Activated CD8-positive, alpha-beta T cell treated with anti-CD3 and anti-CD28 coated beads, Interleukin-2, amount 10 ng/mL, durations not matched to agents 7 days and 5 days (primary cell): ENCODE measurements at regions of chr4 and their contacts with region 1.

Region 1: GRCh38 chr4:77203380-77204197 is 46.6 kb downstream of the CCNG2 start:
- DNase-seq: peak; percentile 82
- ATAC-seq: peak; percentile 80
- H3K4me3 Mint-ChIP-seq: no peak overlapping the region
- H3K27ac Mint-ChIP-seq: no peak overlapping the region
- H3K4me1 Mint-ChIP-seq: peaks cover 12% of the 10 kb centered on the region
- H3K27me3 Mint-ChIP-seq: peaks cover 6% of the 10 kb centered on the region

Region 2: GRCh38 chr4:76830964-76831703 is 372.5 kb before region 1 on chr4:
- CTCF ChIA-PET with region 1: no interaction called
- POLR2A ChIA-PET with region 1: no interaction called
- DNase-seq: no peak
- ATAC-seq: no peak
- H3K4me3 Mint-ChIP-seq: no peak overlapping the region
- H3K27ac Mint-ChIP-seq: no peak overlapping the region
- H3K4me1 Mint-ChIP-seq: no peaks in the 10 kb centered on the region
- H3K27me3 Mint-ChIP-seq: no peaks in the 10 kb centered on the region

Region 3: GRCh38 chr4:77044461-77045150 is 159.0 kb before region 1 on chr4:
- CTCF ChIA-PET with region 1: interaction called, 103 read pairs
- POLR2A ChIA-PET with region 1: no interaction called
- DNase-seq: no peak
- ATAC-seq: peak; percentile 73
- H3K4me3 Mint-ChIP-seq: no peak overlapping the region
- H3K27ac Mint-ChIP-seq: no peak overlapping the region
- H3K4me1 Mint-ChIP-seq: peaks cover 9% of the 10 kb centered on the region
- H3K27me3 Mint-ChIP-seq: no peaks in the 10 kb centered on the region

Region 4: DNA sequence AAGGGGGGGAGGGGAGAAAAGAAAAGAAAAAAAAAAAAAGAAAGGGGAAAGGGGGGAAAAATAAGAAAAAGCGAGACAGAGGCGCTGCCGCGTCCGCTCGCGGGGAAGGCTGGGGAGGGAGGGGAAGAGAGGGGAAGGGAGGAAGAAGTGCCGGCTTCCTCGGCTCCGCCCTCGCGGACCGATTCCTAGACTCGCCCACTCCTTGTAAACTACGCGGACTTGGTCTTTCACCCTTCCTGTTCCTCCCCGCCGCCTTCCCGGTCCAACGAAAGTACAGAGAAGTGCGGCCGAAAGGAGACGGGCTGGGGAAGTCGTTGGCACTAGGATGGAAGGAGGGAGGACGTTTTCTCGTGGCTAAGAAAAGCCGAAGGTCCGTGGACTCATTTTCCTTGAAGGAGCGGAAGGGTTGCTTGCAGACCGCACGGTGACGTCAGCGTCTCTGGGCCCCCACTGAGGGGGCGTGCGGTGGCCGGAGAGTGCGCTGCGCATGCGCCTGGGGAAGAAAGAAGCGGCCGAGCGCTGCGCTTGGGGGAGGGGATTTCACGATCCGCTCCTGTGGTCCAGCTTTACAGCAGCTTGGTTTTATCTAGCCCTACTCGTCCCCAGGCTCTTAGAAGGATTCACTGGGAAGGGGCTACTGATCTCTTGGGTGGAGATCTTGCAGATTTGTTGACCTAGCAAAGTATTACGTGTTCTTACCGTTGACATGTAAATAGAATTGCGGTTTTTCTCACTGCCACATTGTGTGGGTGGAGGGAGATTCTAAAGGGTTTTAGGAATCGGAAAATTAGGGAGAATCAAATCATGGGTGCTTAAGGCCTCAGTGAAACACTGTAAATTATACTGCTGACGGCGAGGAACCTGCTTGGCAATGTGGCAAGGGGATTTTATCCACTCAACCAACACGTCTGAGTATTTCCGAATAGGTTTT is 127.5 kb before region 1 on chr4 and contains the start of gene CCNI:
- CTCF ChIA-PET with region 1: interaction called, 54 read pairs
- POLR2A ChIA-PET with region 1: interaction called, 6 read pairs
- DNase-seq: peak; percentile 95
- ATAC-seq: peak; percentile 83
- H3K4me3 Mint-ChIP-seq: no peak within 1 kb of the TSS
- H3K27ac Mint-ChIP-seq: peak within 1 kb of the TSS; percentile 100
- H3K4me1 Mint-ChIP-seq: peaks cover 38% of the 10 kb centered on the region
- H3K27me3 Mint-ChIP-seq: no peaks in the 10 kb centered on the region
- total RNA-seq, gene CCNI: 203 to 216 TPM

Region 5: GRCh38 chr4:77095101-77095821 is 108.3 kb before region 1 on chr4:
- CTCF ChIA-PET with region 1: interaction called, 296 read pairs
- POLR2A ChIA-PET with region 1: no interaction called
- DNase-seq: peak; percentile 84
- ATAC-seq: peak; percentile 100
- H3K4me3 Mint-ChIP-seq: no peak overlapping the region
- H3K27ac Mint-ChIP-seq: no peak overlapping the region
- H3K4me1 Mint-ChIP-seq: peaks cover 12% of the 10 kb centered on the region
- H3K27me3 Mint-ChIP-seq: no peaks in the 10 kb centered on the region

Region 6: GRCh38 chr4:77126809-77127208 is 76.8 kb before region 1 on chr4:
- CTCF ChIA-PET with region 1: interaction called, 18 read pairs
- POLR2A ChIA-PET with region 1: interaction called, 3 read pairs
- DNase-seq: no peak
- ATAC-seq: peak; percentile 47
- H3K4me3 Mint-ChIP-seq: no peak overlapping the region
- H3K27ac Mint-ChIP-seq: no peak overlapping the region
- H3K4me1 Mint-ChIP-seq: peaks cover 15% of the 10 kb centered on the region
- H3K27me3 Mint-ChIP-seq: peaks cover 9% of the 10 kb centered on the region

Region 7: DNA sequence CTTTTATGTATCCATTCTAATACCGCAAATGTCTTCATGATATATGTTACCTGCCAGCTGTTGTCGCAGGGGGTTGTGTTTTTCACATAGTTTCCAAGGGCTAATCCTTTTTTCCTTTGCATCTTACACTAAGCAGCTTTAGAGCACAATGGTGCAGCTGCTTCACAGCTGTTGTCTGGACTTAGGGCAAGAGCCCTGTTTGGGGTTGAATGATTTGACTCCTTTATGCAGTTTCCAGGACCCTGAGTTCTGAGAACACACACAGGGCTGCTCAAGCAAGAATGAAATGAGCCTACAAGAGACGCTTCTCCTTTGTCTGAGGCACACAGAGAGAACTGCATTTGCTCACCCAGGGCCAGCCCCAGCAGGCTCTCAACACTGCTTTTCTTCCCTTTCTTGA is 26.4 kb before region 1 on chr4:
- CTCF ChIA-PET with region 1: interaction called, 11 read pairs
- POLR2A ChIA-PET with region 1: no interaction called
- DNase-seq: no peak
- ATAC-seq: no peak
- H3K4me3 Mint-ChIP-seq: no peak overlapping the region
- H3K27ac Mint-ChIP-seq: no peak overlapping the region
- H3K4me1 Mint-ChIP-seq: no peaks in the 10 kb centered on the region
- H3K27me3 Mint-ChIP-seq: peaks cover 11% of the 10 kb centered on the region

Region 8: DNA sequence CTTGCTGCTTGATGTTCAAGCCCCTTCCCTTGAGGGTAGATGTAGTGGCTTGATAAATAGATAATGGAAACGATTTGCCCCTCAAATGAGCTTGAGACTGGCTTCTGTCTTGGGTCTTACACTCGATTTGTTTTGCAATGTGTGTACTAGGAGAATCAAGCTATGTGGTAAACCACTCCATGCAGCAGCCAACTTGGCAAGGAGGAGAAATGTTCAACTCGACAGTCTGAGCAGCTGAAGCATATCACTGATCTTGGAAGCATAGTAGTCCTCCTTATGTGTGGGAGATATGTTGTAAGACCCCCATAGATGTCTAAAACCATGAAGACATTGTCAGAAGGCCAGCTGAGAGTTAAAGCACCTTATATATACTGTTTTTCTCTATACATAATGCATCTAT is 78.7 kb after region 1 on chr4:
- CTCF ChIA-PET with region 1: no interaction called
- POLR2A ChIA-PET with region 1: no interaction called
- DNase-seq: no peak
- ATAC-seq: no peak
- H3K4me3 Mint-ChIP-seq: no peak overlapping the region
- H3K27ac Mint-ChIP-seq: no peak overlapping the region
- H3K4me1 Mint-ChIP-seq: no peaks in the 10 kb centered on the region
- H3K27me3 Mint-ChIP-seq: peaks cover 4% of the 10 kb centered on the region